ENCODE measurements at regions of chr17 and their contacts with region 1.

Region 1: GRCh38 chr17:7561028-7561575 is 617 bp upstream of the SENP3 start:
- DNase-seq: peak; percentile 86
- H3K4me3 ChIP-seq: peak overlapping the region; percentile 58 to 80 (median 62)
- H3K27ac ChIP-seq: peak overlapping the region; percentile 60
- H3K4me1 ChIP-seq: peaks cover 36% of the 10 kb centered on the region
- H3K27me3 ChIP-seq: no peaks in the 10 kb centered on the region
- CTCF ChIP-seq: peak; percentile 82 to 96
- POLR2A ChIP-seq: no peak

Region 2: DNA sequence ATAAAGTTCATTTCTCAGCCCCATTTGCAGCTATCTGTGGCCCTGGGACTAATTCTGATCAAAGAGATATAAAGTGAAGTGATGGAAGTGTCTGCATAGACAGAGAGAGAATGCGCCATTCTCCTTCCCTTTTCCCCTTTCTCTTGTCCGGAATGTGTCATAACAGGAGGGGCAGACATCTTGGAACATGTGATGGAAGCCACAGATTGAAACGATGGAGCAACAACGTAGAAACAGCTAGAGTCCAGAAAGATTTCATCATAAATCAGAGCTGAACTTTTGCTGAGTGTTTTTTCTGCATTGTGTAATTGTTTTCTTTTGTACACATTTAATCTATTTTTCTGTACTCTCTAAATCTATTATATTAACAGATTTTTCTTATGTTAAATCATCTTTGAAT is 393.3 kb before region 1 on chr17:
- CTCF ChIA-PET with region 1: no interaction called
- POLR2A ChIA-PET with region 1: no interaction called
- dilution Hi-C with region 1: no loop called
- intact Hi-C with region 1: no loop called
- DNase-seq: no peak
- H3K4me3 ChIP-seq: no peak overlapping the region
- H3K27ac ChIP-seq: no peak overlapping the region
- H3K4me1 ChIP-seq: no peaks in the 10 kb centered on the region
- H3K27me3 ChIP-seq: no peaks in the 10 kb centered on the region
- CTCF ChIP-seq: no peak
- POLR2A ChIP-seq: no peak

Region 3: GRCh38 chr17:7289256-7290032 is 271.7 kb before region 1 on chr17:
- CTCF ChIA-PET with region 1: no interaction called
- POLR2A ChIA-PET with region 1: no interaction called
- dilution Hi-C with region 1: no loop called
- intact Hi-C with region 1: no loop called
- DNase-seq: no peak
- H3K4me3 ChIP-seq: no peak overlapping the region
- H3K27ac ChIP-seq: no peak overlapping the region
- H3K4me1 ChIP-seq: no peaks in the 10 kb centered on the region
- H3K27me3 ChIP-seq: peaks cover 20 to 40% of the 10 kb centered on the region in 2 experiments
- CTCF ChIP-seq: no peak
- POLR2A ChIP-seq: no peak

Region 4: DNA sequence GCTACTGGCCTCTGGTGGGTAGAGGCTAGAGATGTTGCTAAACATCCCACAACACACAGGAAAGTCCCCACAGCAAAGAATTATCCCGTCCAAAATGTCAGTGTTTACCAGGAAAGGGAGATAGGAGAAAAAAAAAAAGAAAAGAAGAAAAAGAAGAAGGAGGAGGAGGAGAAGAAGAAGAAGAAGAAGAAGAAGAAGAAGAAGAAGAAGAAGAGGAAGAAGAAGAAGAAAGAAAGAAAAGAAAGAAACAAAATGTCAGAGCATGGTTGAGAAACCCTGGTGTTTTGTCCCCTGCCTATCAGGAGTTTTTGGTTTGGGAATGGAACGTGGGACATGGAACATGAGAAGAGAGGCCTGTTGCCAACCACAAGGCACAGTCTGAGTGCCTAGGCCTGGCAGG is 203.7 kb before region 1 on chr17:
- CTCF ChIA-PET with region 1: interaction called, 48 read pairs
- POLR2A ChIA-PET with region 1: no interaction called
- dilution Hi-C with region 1: no loop called
- intact Hi-C with region 1: loop called (anchors 1 kb)
- DNase-seq: no peak
- H3K4me3 ChIP-seq: no peak overlapping the region
- H3K27ac ChIP-seq: no peak overlapping the region
- H3K4me1 ChIP-seq: peaks cover 3% of the 10 kb centered on the region
- H3K27me3 ChIP-seq: no peaks in the 10 kb centered on the region
- CTCF ChIP-seq: no peak
- POLR2A ChIP-seq: no peak

Region 5: DNA sequence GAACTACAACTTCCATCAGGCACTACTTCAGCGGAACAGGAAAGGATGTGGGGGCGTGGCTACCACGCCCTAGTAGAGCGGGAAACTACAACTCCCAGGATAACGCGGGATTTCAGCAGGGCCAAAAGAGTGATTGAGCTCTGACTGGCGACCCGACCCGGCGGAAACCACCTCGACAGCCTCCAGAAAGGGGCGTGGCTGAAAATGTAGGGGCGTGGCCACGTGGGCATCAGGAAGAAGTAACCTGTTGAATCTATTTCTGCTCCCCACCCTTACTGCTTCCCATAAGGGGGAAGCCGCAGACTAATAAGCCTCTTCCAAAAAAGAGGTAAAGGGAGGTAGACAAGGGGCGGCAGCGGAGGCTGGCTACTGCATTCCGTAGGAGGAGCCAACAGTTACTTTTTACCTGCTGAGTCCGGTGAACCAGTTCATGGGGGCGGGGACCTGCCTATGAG is 125.9 kb before region 1 on chr17 and contains the start of gene TMEM102:
- CTCF ChIA-PET with region 1: interaction called, 31 read pairs
- POLR2A ChIA-PET with region 1: no interaction called
- dilution Hi-C with region 1: no loop called
- intact Hi-C with region 1: loop called (anchors 1 kb)
- DNase-seq: peak; percentile 97
- H3K4me3 ChIP-seq: peak within 1 kb of the TSS; percentile 54 to 83 (median 83)
- H3K27ac ChIP-seq: peak within 1 kb of the TSS; percentile 32
- H3K4me1 ChIP-seq: peaks cover 21% of the 10 kb centered on the region
- H3K27me3 ChIP-seq: peaks cover 18 to 21% of the 10 kb centered on the region in 2 experiments
- CTCF ChIP-seq: no peak
- POLR2A ChIP-seq: no peak
- total RNA-seq, gene TMEM102: 6.1 and 6.5 TPM in 2 replicates

Region 6: GRCh38 chr17:7496470-7497183 is 64.5 kb before region 1 on chr17:
- CTCF ChIA-PET with region 1: interaction called, 22 read pairs
- POLR2A ChIA-PET with region 1: no interaction called
- dilution Hi-C with region 1: no loop called
- intact Hi-C with region 1: no loop called
- DNase-seq: peak; percentile 19
- H3K4me3 ChIP-seq: no peak overlapping the region
- H3K27ac ChIP-seq: peak overlapping the region; percentile 51
- H3K4me1 ChIP-seq: peaks cover 23% of the 10 kb centered on the region
- H3K27me3 ChIP-seq: no peaks in the 10 kb centered on the region
- CTCF ChIP-seq: no peak
- POLR2A ChIP-seq: no peak

Region 7: DNA sequence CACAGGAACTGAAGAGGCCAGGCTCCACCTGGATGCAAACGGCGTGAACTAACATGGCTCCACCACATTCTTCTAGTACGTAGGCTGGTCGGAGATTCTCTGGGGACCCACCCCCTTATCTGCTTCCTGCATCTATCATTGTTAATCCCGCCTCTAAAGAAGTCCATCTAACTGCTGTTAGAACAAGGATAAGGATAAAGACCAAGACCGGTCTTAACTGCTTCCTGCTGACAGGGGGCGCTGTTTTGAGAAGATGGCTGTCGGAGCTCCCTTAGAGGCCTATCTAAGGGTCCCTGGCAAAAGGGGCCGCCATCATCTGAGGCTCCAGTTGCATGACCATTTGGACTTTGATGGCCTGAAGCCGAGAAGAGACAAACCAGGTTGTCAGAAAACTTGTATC is 38.1 kb before region 1 on chr17:
- CTCF ChIA-PET with region 1: interaction called, 62 read pairs
- POLR2A ChIA-PET with region 1: no interaction called
- dilution Hi-C with region 1: no loop called
- intact Hi-C with region 1: loop called (anchors 2 kb)
- DNase-seq: peak; percentile 9
- H3K4me3 ChIP-seq: no peak overlapping the region
- H3K27ac ChIP-seq: no peak overlapping the region
- H3K4me1 ChIP-seq: no peaks in the 10 kb centered on the region
- H3K27me3 ChIP-seq: no peaks in the 10 kb centered on the region
- CTCF ChIP-seq: peak; percentile 22 to 33
- POLR2A ChIP-seq: no peak

Region 8: DNA sequence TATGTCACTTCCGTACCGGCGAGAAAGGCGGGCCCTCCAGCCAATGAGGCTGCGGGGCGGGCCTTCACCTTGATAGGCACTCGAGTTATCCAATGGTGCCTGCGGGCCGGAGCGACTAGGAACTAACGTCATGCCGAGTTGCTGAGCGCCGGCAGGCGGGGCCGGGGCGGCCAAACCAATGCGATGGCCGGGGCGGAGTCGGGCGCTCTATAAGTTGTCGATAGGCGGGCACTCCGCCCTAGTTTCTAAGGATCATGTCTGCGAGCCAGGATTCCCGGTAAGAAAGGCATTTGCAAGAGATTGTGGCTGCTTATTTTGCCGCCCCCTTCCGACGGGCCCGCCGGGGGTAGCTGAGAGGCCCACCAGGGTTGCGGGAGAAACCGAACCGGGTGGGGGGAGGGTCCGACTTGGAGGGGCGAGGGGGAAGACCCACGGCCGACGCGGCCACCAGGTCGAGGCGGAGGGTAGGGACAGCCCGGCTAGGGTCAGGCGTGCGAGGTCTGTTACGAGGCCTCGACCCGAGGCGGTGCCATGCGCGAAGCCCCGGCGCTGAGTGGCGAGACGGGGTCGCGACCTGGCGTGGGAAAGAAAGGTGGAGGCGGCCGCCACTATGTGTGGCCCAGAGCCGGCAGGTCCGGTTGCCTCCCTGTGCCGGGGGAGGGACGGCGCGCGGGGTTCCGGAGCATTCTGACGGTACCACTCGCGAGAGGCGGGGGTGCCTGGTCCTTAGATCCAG is 11.7 kb after region 1 on chr17:
- CTCF ChIA-PET with region 1: interaction called, 13 read pairs
- POLR2A ChIA-PET with region 1: no interaction called
- dilution Hi-C with region 1: no loop called
- intact Hi-C with region 1: loop called (anchors 1 kb)
- DNase-seq: peak; percentile 100
- H3K4me3 ChIP-seq: peak overlapping the region; percentile 86 to 96 (median 87)
- H3K27ac ChIP-seq: peak overlapping the region; percentile 91
- H3K4me1 ChIP-seq: peaks cover 43% of the 10 kb centered on the region
- H3K27me3 ChIP-seq: no peaks in the 10 kb centered on the region
- CTCF ChIP-seq: no peak
- POLR2A ChIP-seq: peak; percentile 99

Region 9: DNA sequence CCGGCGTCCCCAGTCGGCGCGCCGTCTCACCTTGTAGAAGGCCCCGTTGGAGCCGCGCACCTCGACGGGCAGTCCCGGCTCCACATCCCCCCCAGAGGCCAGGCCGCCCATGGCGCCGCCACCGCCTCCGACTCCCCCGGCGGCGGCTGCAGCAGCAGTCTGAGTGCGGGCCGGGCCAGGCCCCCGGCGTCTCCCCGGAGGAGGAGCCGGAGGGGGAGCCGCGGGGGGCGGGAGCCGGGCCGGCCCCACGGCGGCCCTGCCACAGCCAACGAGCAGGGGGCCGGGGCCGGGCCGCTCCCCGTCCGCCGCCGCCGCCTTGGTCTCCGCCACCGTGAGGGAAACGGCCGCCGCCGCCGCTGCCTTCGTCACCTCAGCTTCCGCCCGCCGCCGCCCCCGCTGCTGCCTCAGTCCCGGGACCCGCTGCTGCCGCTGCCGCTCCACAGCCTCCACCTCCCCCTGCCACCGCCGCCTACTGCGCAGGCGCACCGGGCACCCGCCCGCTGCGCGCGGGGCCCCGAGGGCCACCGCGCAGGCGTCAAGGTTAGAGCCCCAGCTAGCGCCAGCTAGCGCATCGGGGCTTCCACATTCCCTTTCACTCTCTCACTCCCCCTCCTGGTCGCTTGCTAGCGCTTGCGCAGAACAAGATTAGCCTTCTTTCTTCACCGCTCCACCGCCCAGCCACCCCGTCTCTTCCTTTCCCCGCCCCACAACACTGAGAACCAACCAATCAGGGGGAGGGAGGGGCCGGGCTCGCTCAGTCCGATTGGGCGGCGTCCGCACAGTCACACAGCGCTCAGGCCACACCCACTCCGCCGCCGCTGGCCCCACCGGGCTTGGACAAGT is 53.5 kb after region 1 on chr17 and contains the start of gene FXR2:
- CTCF ChIA-PET with region 1: interaction called, 4 read pairs
- POLR2A ChIA-PET with region 1: no interaction called
- dilution Hi-C with region 1: no loop called
- intact Hi-C with region 1: loop called (anchors 2 kb)
- DNase-seq: peak; percentile 100
- H3K4me3 ChIP-seq: peak within 1 kb of the TSS; percentile 55 to 97 (median 73)
- H3K27ac ChIP-seq: peak within 1 kb of the TSS; percentile 56
- H3K4me1 ChIP-seq: peaks cover 24% of the 10 kb centered on the region
- H3K27me3 ChIP-seq: no peaks in the 10 kb centered on the region
- CTCF ChIP-seq: peak; percentile 68 to 79
- POLR2A ChIP-seq: peak; percentile 67
- total RNA-seq, gene FXR2: 33.1 and 40.1 TPM in 2 replicates

Region 10: GRCh38 chr17:7640783-7641182 is 79.7 kb after region 1 on chr17:
- CTCF ChIA-PET with region 1: no interaction called
- POLR2A ChIA-PET with region 1: no interaction called
- dilution Hi-C with region 1: no loop called
- intact Hi-C with region 1: no loop called
- DNase-seq: no peak
- H3K4me3 ChIP-seq: no peak overlapping the region
- H3K27ac ChIP-seq: no peak overlapping the region
- H3K4me1 ChIP-seq: no peaks in the 10 kb centered on the region
- H3K27me3 ChIP-seq: no peaks in the 10 kb centered on the region
- CTCF ChIP-seq: no peak
- POLR2A ChIP-seq: no peak